ENCODE measurements at regions of chr13 and their contacts with region 1.

Region 1: GRCh38 chr13:43767341-43767931 is 19.3 kb downstream of the ENOX1 start:
- DNase-seq: no peak

Region 2: DNA sequence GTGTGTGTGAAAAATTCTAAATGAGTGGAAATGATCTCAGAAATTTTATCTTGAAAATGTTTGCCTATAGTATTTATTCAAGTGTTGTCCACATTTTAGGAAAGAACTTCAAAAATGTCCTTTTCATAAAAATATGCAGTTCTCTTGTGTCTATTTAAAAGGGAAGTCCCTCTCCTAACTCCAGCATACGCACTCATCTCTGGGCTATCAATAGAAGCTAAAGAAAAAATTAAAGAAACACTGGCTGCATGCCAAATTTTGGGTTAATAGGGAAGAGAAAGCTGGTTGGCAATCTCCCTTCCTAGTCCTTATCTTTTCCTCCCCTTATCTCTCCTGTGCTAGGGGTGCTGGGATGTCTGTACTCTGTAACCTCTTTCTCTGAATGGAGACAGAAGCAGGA is 294.0 kb before region 1 on chr13:
- intact Hi-C with region 1: loop called (anchors 2 kb)
- DNase-seq: no peak

Region 3: DNA sequence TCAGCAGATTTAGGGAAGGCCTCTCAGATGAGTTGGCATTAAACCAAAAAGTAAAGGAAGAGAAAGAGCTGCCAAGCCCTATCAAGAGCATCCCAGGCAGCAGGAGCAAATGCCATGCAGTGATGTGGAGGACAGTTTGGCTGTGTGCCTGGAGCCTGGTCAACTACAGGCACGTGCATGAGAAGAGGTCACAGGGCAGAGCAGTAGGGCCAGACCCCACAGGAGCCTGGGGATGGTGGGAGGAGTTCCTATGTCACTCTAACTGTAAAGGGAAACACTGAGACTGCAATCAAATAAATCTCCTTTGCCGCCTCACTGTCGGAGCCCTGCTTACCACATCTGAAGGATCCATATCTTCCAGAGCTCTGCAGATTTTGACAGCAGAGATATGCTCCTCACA is 221.2 kb before region 1 on chr13:
- intact Hi-C with region 1: loop called (anchors 10 kb)
- DNase-seq: no peak

Region 4: DNA sequence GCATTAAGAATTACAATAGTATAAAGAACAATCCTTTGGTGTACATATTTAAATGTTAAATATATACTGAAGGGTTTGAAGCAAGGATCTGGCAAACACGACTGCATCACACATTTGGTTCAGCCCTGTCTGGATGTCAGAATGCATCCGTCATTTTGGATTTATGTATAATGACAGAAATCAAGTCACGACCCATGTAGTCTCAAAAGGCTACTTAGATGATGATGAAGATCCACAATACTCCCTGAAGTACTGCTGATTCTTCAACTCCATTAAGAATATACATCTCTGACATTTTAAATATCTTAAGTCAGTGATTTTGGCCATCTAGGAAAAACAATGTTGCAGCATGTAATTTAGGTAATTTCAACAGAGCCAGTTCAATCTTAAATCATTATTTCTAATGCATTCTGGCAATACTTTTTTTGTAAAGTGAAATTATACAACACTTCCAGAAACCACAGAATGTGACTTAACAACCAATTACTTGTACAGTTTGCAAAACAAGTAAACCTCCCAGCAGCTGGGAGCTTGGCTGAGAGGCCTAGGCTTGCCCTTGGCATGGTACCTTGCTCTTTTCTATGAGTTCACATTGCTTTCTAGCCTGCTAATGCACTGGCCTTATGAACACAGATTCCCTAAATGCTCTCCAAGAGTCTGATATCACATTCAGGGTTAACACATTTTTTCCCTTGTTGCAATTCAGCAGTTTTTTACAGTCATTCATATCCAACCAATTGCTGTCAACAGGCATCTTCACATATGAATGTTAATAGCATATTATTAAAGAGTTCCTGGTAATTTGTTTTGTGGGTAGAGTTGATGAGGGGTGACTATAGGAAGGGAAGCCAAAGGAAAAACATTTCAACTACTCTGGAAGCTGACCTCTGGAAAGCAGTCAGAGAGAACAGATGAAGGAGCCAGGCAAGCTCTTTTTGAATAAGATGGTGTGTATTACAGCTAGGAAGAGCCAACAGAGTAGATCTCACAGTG is 155.9 kb before region 1 on chr13:
- intact Hi-C with region 1: no loop called
- DNase-seq: no peak

Region 5: DNA sequence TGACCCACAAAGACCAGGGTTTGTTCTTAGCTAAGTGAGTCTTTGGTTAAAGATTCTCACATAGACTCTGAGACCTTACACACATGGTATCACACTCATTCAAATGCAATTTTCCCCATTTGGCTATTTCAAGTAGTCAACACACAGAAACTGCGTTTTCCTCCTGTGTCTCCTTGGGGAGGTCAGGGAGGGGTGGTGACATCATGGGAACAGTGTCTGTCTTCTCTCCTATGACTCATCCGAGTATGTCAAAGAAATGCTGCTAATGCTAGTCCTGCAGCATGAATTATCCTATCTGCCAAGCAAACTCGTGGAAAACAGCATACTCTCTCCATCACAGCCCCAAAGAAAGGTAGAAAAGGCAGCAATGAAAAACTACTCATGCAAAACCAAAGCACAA is 80.9 kb before region 1 on chr13:
- intact Hi-C with region 1: loop called (anchors 2 kb)
- DNase-seq: no peak

Region 6: DNA sequence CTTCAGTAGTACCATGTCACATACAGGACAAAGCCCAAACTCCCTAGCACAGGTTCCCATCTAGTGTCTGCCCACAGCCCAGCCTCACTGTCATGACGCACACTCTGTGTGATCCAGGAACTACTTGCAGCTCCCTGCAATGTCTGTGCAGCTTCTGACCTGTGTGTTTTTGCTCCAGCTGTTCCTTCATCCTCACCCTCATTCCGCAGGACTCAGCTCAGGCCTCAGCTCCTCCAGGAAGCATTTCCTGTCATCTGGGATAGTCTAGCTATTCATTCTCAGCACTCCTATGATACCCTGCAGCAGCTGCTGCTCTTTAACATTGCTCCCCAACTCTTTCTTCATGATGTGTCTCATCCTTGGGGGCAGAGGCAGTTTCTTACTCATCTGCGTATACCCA is 36.8 kb before region 1 on chr13:
- intact Hi-C with region 1: no loop called
- DNase-seq: no peak

Region 7: GRCh38 chr13:44004878-44005277 is 237.4 kb after region 1 on chr13:
- intact Hi-C with region 1: no loop called
- DNase-seq: no peak

Measured in cardiac septum (tissue), 1 donor.